Natural killer cell (primary cell): ENCODE measurements at regions of chr3 and their contacts with region 1.

Region 1: DNA sequence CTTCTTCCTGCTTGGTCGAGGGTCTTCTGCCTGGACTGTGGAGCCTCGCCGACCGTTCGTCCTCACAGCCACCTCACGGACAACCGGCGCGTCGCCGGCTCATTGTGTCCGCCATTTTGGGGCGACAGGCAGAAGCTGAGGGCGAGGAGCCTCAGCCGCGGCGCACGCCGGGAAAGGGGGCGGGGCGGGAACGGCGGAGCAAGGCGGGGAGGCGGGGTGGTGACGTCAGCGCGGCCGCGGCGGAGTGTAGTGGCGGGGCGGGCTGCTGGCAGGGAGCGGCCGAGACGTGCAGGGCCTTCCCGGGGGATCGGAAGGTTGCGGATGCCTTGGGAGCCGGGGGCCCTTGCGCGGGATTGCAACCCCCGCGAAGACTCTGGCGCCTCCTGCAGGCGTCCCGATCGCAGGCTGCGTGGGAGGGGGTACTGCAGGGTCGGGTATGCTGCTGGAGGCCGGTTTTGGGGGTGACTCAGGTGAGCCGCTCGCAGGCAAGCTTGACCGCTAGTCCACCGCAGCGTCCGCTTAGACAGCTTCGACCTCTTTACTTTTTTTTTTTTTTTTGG is at the start of gene WDR82:
- DNase-seq: peak; percentile 98
- ATAC-seq: peak; percentile 78 to 94 (median 84)
- H3K4me3 ChIP-seq: peak within 1 kb of the TSS; percentile 97
- H3K4me3 Mint-ChIP-seq: peak within 1 kb of the TSS; percentile 94
- H3K27ac ChIP-seq: peak within 1 kb of the TSS; percentile 97
- H3K27ac Mint-ChIP-seq: peak within 1 kb of the TSS; percentile 90 to 98
- H3K4me1 ChIP-seq: peaks cover 66% of the 10 kb centered on the region
- H3K4me1 Mint-ChIP-seq: peaks cover 62 to 77% of the 10 kb centered on the region in 2 donors
- H3K27me3 ChIP-seq: no peaks in the 10 kb centered on the region
- H3K27me3 Mint-ChIP-seq: peaks cover 0 to 3% of the 10 kb centered on the region in 2 donors
- CTCF ChIP-seq: no peak
- total RNA-seq, gene WDR82: 108 to 131 (median 109) TPM

Region 2: GRCh38 chr3:52238761-52239701 is 39.6 kb before region 1 on chr3 and contains the start of gene TWF2:
- intact Hi-C with region 1: loop called (anchors 1 kb)
- DNase-seq: peak; percentile 84 to 94
- ATAC-seq: peak; percentile 89 to 95 (median 92)
- H3K4me3 ChIP-seq: peak within 1 kb of the TSS; percentile 98
- H3K4me3 Mint-ChIP-seq: peak within 1 kb of the TSS; percentile 95
- H3K27ac ChIP-seq: peak within 1 kb of the TSS; percentile 78
- H3K27ac Mint-ChIP-seq: peak within 1 kb of the TSS; percentile 87 to 91
- H3K4me1 ChIP-seq: peaks cover 68% of the 10 kb centered on the region
- H3K4me1 Mint-ChIP-seq: peaks cover 31 to 61% of the 10 kb centered on the region in 2 donors
- H3K27me3 ChIP-seq: no peaks in the 10 kb centered on the region
- H3K27me3 Mint-ChIP-seq: no peaks in the 10 kb centered on the region
- CTCF ChIP-seq: peak; percentile 54
- total RNA-seq, gene TWF2: 49.2 to 76.6 (median 52.0) TPM

Region 3: GRCh38 chr3:52253314-52254304 is 25.0 kb before region 1 on chr3:
- intact Hi-C with region 1: loop called (anchors 2 kb)
- DNase-seq: peak; percentile 61 to 93
- ATAC-seq: peak; percentile 85 to 94 (median 89)
- H3K4me3 ChIP-seq: peak overlapping the region; percentile 10
- H3K4me3 Mint-ChIP-seq: peak overlapping the region; percentile 93
- H3K27ac ChIP-seq: peak overlapping the region; percentile 92
- H3K27ac Mint-ChIP-seq: peak overlapping the region; percentile 94 to 95
- H3K4me1 ChIP-seq: peaks cover 59% of the 10 kb centered on the region
- H3K4me1 Mint-ChIP-seq: peaks cover 64 to 72% of the 10 kb centered on the region in 2 donors
- H3K27me3 ChIP-seq: no peaks in the 10 kb centered on the region
- H3K27me3 Mint-ChIP-seq: no peaks in the 10 kb centered on the region
- CTCF ChIP-seq: no peak

Region 4: DNA sequence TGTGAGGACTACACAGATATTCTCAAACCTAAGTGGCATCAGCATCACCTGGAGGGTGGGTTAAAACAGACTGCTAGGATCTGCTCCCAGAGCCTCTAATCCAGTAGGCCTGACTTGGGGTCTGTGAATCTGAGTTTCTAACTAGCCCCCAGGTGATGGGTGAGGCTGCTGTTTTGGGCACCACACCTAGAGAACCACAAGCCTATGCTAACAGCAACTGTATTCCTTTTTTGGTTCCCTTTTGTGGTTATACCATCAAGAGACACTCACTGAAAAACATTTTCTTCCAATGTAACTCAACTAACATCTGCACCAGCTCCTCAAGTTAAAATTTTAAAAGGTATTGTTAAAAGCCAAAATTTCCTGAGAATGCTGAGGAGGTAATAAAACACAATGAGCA is 16.1 kb before region 1 on chr3:
- intact Hi-C with region 1: loop called (anchors 2 kb)
- DNase-seq: peak in 1 of 2 donors; percentile 27
- ATAC-seq: no peak
- H3K4me3 ChIP-seq: no peak overlapping the region
- H3K4me3 Mint-ChIP-seq: no peak overlapping the region
- H3K27ac ChIP-seq: peak overlapping the region; percentile 44
- H3K27ac Mint-ChIP-seq: peak overlapping the region; percentile 43 to 67
- H3K4me1 ChIP-seq: peaks cover 6% of the 10 kb centered on the region
- H3K4me1 Mint-ChIP-seq: peaks cover 33 to 41% of the 10 kb centered on the region in 2 donors
- H3K27me3 ChIP-seq: no peaks in the 10 kb centered on the region
- H3K27me3 Mint-ChIP-seq: no peaks in the 10 kb centered on the region
- CTCF ChIP-seq: no peak

Region 5: GRCh38 chr3:52291508-52292181 is 13.1 kb after region 1 on chr3:
- intact Hi-C with region 1: loop called (anchors 1 kb)
- DNase-seq: peak; percentile 40 to 67
- ATAC-seq: no peak
- H3K4me3 ChIP-seq: no peak overlapping the region
- H3K4me3 Mint-ChIP-seq: peak overlapping the region; percentile 45
- H3K27ac ChIP-seq: no peak overlapping the region
- H3K27ac Mint-ChIP-seq: peak overlapping the region; percentile 59 to 65
- H3K4me1 ChIP-seq: peaks cover 41% of the 10 kb centered on the region
- H3K4me1 Mint-ChIP-seq: peaks cover 29 to 50% of the 10 kb centered on the region in 2 donors
- H3K27me3 ChIP-seq: no peaks in the 10 kb centered on the region
- H3K27me3 Mint-ChIP-seq: no peaks in the 10 kb centered on the region
- CTCF ChIP-seq: peak; percentile 56

Region 6: GRCh38 chr3:52302426-52303145 is 24.0 kb after region 1 on chr3:
- intact Hi-C with region 1: no loop called
- DNase-seq: no peak
- ATAC-seq: no peak
- H3K4me3 ChIP-seq: no peak overlapping the region
- H3K4me3 Mint-ChIP-seq: no peak overlapping the region
- H3K27ac ChIP-seq: no peak overlapping the region
- H3K27ac Mint-ChIP-seq: peak overlapping the region in 1 of 2 donors; percentile 24
- H3K4me1 ChIP-seq: peaks cover 28% of the 10 kb centered on the region
- H3K4me1 Mint-ChIP-seq: peaks cover 19 to 45% of the 10 kb centered on the region in 2 donors
- H3K27me3 ChIP-seq: no peaks in the 10 kb centered on the region
- H3K27me3 Mint-ChIP-seq: no peaks in the 10 kb centered on the region
- CTCF ChIP-seq: no peak

Region 7: GRCh38 chr3:52313774-52314188 is 35.2 kb after region 1 on chr3:
- intact Hi-C with region 1: loop called (anchors 5 kb)
- DNase-seq: no peak
- ATAC-seq: no peak
- H3K4me3 ChIP-seq: no peak overlapping the region
- H3K4me3 Mint-ChIP-seq: no peak overlapping the region
- H3K27ac ChIP-seq: peak overlapping the region; percentile 55
- H3K27ac Mint-ChIP-seq: peak overlapping the region in 1 of 2 donors; percentile 92
- H3K4me1 ChIP-seq: peaks cover 61% of the 10 kb centered on the region
- H3K4me1 Mint-ChIP-seq: peaks cover 24 to 62% of the 10 kb centered on the region in 2 donors
- H3K27me3 ChIP-seq: no peaks in the 10 kb centered on the region
- H3K27me3 Mint-ChIP-seq: no peaks in the 10 kb centered on the region
- CTCF ChIP-seq: no peak

Region 8: GRCh38 chr3:52892625-52893311 is 614.2 kb after region 1 on chr3:
- intact Hi-C with region 1: no loop called
- DNase-seq: peak in 1 of 2 donors; percentile 67
- ATAC-seq: no peak
- H3K4me3 ChIP-seq: no peak overlapping the region
- H3K4me3 Mint-ChIP-seq: peak overlapping the region; percentile 72
- H3K27ac ChIP-seq: peak overlapping the region; percentile 84
- H3K27ac Mint-ChIP-seq: peak overlapping the region; percentile 63 to 74
- H3K4me1 ChIP-seq: peaks cover 49% of the 10 kb centered on the region
- H3K4me1 Mint-ChIP-seq: peaks cover 47 to 55% of the 10 kb centered on the region in 2 donors
- H3K27me3 ChIP-seq: no peaks in the 10 kb centered on the region
- H3K27me3 Mint-ChIP-seq: no peaks in the 10 kb centered on the region
- CTCF ChIP-seq: no peak